Transverse colon (tissue), 4 donors: ENCODE measurements at regions of chr4 and their contacts with region 1.

Region 1: DNA sequence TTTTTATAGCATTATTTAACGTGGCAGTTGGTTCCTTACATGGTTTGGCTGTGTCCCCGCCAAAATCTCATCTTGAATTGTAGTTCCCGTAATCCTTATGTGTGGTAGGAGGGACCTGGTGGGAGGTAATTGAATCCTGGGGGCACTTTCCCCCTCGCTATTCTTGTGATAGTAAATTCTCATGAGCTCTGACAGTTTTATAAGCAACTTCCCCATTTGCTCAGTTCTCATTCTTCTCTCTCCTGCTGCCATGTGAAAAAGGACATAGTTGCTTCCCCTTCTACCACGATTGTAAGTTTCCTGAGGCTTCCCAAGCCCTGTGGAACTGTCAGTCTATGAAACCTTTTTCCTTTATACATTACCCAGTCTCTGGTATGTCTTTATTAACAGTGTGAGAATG is 329.5 kb downstream of the GRIA2 start:
- DNase-seq: no peak
- H3K4me3 ChIP-seq: no peak overlapping the region
- H3K27ac ChIP-seq: no peak overlapping the region
- H3K4me1 ChIP-seq: no peaks in the 10 kb centered on the region
- H3K27me3 ChIP-seq: no peaks in the 10 kb centered on the region
- CTCF ChIP-seq: no peak
- EP300 ChIP-seq: no peak
- POLR2A ChIP-seq: no peak

Region 2: DNA sequence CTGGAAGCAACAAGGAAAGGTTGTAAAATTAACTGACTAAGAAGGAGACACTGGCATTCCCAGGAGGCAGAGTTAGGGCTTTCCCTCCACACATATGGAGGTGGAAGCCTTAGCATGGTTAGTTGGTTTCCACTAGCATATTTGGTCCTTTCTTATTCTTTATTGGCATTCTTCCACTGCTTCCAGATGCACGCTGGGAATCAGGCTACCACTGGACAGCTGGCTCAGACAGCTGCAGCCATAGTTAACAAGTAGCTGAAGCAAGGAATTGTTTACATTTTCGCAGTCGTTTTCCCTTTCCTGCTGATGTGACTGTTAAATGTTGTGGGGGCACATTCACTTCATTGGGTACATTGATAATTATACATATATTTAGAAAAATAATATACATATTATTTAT is 160.3 kb before region 1 on chr4:
- in situ Hi-C with region 1: no loop called
- intact Hi-C with region 1: no loop called
- DNase-seq: no peak
- H3K4me3 ChIP-seq: no peak overlapping the region
- H3K27ac ChIP-seq: no peak overlapping the region
- H3K4me1 ChIP-seq: no peaks in the 10 kb centered on the region
- H3K27me3 ChIP-seq: no peaks in the 10 kb centered on the region
- CTCF ChIP-seq: no peak
- EP300 ChIP-seq: no peak
- POLR2A ChIP-seq: no peak

Region 3: GRCh38 chr4:157514711-157515110 is 35.3 kb before region 1 on chr4:
- in situ Hi-C with region 1: no loop called
- intact Hi-C with region 1: loop called (anchors 1 kb)
- DNase-seq: no peak
- H3K4me3 ChIP-seq: no peak overlapping the region
- H3K27ac ChIP-seq: no peak overlapping the region
- H3K4me1 ChIP-seq: no peaks in the 10 kb centered on the region
- H3K27me3 ChIP-seq: no peaks in the 10 kb centered on the region
- CTCF ChIP-seq: no peak
- EP300 ChIP-seq: no peak
- POLR2A ChIP-seq: no peak